CD4-positive, alpha-beta memory T cell (primary cell): ENCODE measurements at regions of chr19 and their contacts with region 1.

Region 1: DNA sequence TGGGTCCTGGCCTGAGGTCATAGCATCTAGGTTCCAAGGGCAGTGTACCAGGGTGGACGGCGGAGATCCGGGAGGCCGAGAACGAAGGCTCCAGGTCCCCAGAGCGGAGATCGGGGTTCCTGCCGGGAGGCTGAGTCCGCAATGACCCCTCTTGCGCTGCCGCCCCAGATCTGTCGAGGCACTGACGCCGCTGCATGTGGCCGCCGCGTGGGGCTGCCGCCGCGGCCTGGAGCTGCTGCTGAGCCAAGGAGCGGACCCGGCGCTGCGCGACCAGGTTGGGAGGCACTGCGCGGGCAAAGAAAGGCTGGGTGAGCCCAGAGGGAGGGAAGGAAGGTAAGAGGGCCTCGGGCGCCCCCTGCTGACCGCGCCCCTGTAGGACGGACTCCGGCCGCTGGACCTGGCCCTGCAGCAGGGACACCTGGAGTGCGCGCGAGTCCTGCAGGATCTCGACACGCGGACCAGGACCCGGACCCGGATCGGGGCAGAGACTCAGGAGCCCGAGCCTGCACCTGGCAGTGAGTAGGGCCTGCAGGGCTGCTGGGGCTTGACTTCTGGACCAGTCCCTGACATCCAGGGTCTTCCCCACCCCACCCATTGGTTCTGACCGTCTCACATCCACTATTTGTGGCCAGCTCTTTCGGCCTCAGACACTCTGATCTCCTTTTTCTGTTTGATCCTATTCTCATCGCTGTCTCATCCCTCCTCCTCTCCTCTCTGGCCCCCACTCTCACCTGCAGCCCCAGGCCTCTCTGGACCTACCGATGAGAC is 971 bp downstream of the ANKLE1 start:
- DNase-seq: peak; percentile 72 to 79 (median 74)
- H3K4me3 ChIP-seq: peak overlapping the region; percentile 17 to 45
- H3K4me3 Mint-ChIP-seq: peak overlapping the region; percentile 73 to 86 (median 80)
- H3K27ac ChIP-seq: no peak overlapping the region
- H3K27ac Mint-ChIP-seq: peak overlapping the region in 2 of 7 donors; percentile 24 to 42
- H3K4me1 ChIP-seq: peaks cover 17% of the 10 kb centered on the region
- H3K4me1 Mint-ChIP-seq: peaks cover 2 to 4% (median 3%) of the 10 kb centered on the region in 4 donors
- H3K27me3 ChIP-seq: no peaks in the 10 kb centered on the region
- H3K27me3 Mint-ChIP-seq: no peaks in the 10 kb centered on the region

Region 2: GRCh38 chr19:16778796-16779411 is 503.8 kb before region 1 on chr19:
- CTCF ChIA-PET with region 1: no interaction called
- POLR2A ChIA-PET with region 1: no interaction called
- intact Hi-C with region 1: loop called (anchors 2 kb)
- DNase-seq: peak in 4 of 5 donors; percentile 27 to 39 (median 32)
- H3K4me3 ChIP-seq: no peak overlapping the region
- H3K4me3 Mint-ChIP-seq: no peak overlapping the region
- H3K27ac ChIP-seq: no peak overlapping the region
- H3K27ac Mint-ChIP-seq: no peak overlapping the region
- H3K4me1 ChIP-seq: no peaks in the 10 kb centered on the region
- H3K4me1 Mint-ChIP-seq: no peaks in the 10 kb centered on the region
- H3K27me3 ChIP-seq: no peaks in the 10 kb centered on the region
- H3K27me3 Mint-ChIP-seq: peaks cover 5 to 9% of the 10 kb centered on the region in 2 donors

Region 3: GRCh38 chr19:17205237-17206140 is 77.2 kb before region 1 on chr19:
- CTCF ChIA-PET with region 1: interaction called, 7 read pairs
- POLR2A ChIA-PET with region 1: no interaction called
- intact Hi-C with region 1: loop called (anchors 1 kb)
- DNase-seq: peak; percentile 48 to 66 (median 63)
- H3K4me3 ChIP-seq: no peak overlapping the region
- H3K4me3 Mint-ChIP-seq: no peak overlapping the region
- H3K27ac ChIP-seq: no peak overlapping the region
- H3K27ac Mint-ChIP-seq: peak overlapping the region in 2 of 7 donors; percentile 8 to 43
- H3K4me1 ChIP-seq: no peaks in the 10 kb centered on the region
- H3K4me1 Mint-ChIP-seq: peaks cover 0 to 6% (median 2%) of the 10 kb centered on the region in 4 donors
- H3K27me3 ChIP-seq: no peaks in the 10 kb centered on the region
- H3K27me3 Mint-ChIP-seq: no peaks in the 10 kb centered on the region

Region 4: DNA sequence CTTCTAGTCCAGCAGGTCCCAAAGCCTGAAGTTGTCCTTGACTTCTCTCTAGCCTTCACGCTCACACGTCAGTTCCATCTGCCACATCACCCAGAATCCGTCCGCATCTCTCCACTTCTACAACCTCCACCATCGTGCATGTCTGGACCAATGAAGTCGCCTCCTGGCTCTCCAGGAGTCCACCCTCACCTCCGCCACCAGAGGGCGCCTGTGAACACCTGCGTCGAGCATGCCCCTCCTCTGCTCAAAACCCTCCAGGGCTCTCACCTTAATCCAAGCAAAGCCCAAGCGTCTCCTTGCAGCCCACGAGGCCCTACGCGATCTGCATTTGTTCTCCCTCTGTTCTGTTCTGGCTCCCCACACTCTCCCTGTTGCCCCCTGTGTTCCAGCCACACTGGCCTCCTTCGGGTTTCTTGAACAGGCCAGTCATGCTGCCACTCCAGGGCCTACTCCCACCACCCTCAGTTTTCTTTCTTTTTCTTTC is 21.8 kb before region 1 on chr19:
- CTCF ChIA-PET with region 1: interaction called, 83 read pairs
- POLR2A ChIA-PET with region 1: interaction called, 4 read pairs
- intact Hi-C with region 1: loop called (anchors 1 kb)
- DNase-seq: peak; percentile 85 to 88 (median 87)
- H3K4me3 ChIP-seq: no peak overlapping the region
- H3K4me3 Mint-ChIP-seq: no peak overlapping the region
- H3K27ac ChIP-seq: no peak overlapping the region
- H3K27ac Mint-ChIP-seq: peak overlapping the region in 5 of 7 donors; percentile 1 to 82 (median 47)
- H3K4me1 ChIP-seq: peaks cover 14% of the 10 kb centered on the region
- H3K4me1 Mint-ChIP-seq: peaks cover 5 to 22% (median 16%) of the 10 kb centered on the region in 4 donors
- H3K27me3 ChIP-seq: no peaks in the 10 kb centered on the region
- H3K27me3 Mint-ChIP-seq: no peaks in the 10 kb centered on the region

Region 5: DNA sequence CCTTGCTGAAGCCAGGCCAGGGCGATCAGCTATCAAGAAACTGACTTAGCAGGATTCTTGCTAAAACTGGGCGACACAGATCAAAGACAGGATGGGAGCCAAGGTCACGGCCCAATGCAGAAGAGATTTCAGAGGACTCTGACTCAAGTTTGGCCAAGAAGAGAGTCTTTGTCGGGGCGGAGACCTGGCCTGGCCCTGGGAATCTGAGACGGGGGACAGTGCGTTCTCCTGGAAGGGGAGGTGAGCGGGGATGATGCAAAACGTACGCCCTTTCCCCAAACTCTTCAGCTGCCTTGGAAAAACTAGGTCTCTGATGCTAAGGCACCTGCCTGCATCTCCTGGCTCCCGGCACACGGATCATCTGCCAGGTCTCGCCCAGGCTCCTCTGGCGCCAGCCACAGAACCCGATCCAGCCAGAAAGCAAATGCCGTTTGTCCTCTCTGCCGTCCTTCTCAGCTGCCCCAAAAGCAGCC is 147.0 kb after region 1 on chr19:
- CTCF ChIA-PET with region 1: no interaction called
- POLR2A ChIA-PET with region 1: no interaction called
- intact Hi-C with region 1: no loop called
- DNase-seq: no peak
- H3K4me3 ChIP-seq: no peak overlapping the region
- H3K4me3 Mint-ChIP-seq: no peak overlapping the region
- H3K27ac ChIP-seq: no peak overlapping the region
- H3K27ac Mint-ChIP-seq: no peak overlapping the region
- H3K4me1 ChIP-seq: no peaks in the 10 kb centered on the region
- H3K4me1 Mint-ChIP-seq: no peaks in the 10 kb centered on the region
- H3K27me3 ChIP-seq: no peaks in the 10 kb centered on the region
- H3K27me3 Mint-ChIP-seq: no peaks in the 10 kb centered on the region